ENCODE measurements at regions of chr3 and their contacts with region 1.

Region 1: DNA sequence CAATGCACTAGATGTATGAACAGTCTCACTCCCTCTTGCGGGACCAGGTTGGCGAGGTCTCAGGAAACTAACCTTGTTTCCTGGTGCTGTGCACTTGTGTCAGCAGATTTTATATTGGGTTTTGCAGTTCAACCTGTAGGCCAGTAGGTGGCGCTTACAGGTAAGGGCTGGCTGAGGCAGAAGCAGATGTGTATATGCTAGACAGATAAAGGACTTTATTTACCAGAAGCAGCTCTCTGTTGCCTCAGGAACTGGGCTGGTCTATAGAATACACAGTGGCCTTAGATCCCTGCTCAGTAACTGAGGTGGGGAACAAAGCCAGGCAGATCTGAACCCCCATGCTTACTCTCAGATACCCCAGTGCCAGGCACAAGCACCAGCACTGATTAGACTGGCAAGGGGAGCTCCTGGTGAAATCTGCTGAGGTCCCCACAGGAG is 296.8 kb downstream of the DOCK3 start:
- DNase-seq: peak; percentile 48
- ATAC-seq: peak; percentile 98
- H3K4me3 Mint-ChIP-seq: no peak overlapping the region
- H3K27ac Mint-ChIP-seq: no peak overlapping the region; the same call in 1 of the 2 replicates
- H3K4me1 Mint-ChIP-seq: peaks cover 11% of the 10 kb centered on the region
- H3K27me3 Mint-ChIP-seq: no peaks in the 10 kb centered on the region
- CTCF ChIP-seq: peak; percentile 90

Region 2: DNA sequence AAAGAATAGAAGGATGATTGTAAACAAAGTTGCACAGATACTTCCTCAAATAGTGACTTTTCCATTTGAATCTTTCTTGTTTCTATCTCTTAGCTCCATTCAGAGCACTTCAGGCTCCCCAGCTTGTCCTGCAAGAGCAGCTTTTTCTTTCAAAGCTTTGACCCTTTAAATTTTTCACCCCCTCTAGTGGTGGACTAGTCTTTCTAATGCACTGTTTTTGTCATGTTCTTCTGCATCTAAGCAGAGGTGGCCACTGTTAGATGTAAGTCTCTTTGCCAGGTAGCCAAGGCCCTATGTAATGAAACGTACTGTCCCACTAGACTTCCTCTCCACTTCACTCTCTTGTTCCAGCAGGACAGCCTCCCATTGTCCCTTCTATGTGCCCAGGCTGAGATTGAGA is 339.5 kb after region 1 on chr3:
- CTCF ChIA-PET with region 1: interaction called, 11 read pairs
- POLR2A ChIA-PET with region 1: no interaction called
- DNase-seq: no peak
- ATAC-seq: peak; percentile 51
- H3K4me3 Mint-ChIP-seq: no peak overlapping the region
- H3K27ac Mint-ChIP-seq: no peak overlapping the region
- H3K4me1 Mint-ChIP-seq: no peaks in the 10 kb centered on the region
- H3K27me3 Mint-ChIP-seq: no peaks in the 10 kb centered on the region
- CTCF ChIP-seq: no peak